PC-9 (cell line): ENCODE measurements at regions of chr13 and their contacts with region 1.

Region 1: GRCh38 chr13:113562085-113562749 is 22.3 kb upstream of the TFDP1 start:
- DNase-seq: peak; percentile 53 to 60
- H3K4me3 ChIP-seq: no peak overlapping the region
- H3K27ac ChIP-seq: no peak overlapping the region
- H3K4me1 ChIP-seq: no peaks in the 10 kb centered on the region
- H3K27me3 ChIP-seq: no peaks in the 10 kb centered on the region
- CTCF ChIP-seq: peak; percentile 82

Region 2: DNA sequence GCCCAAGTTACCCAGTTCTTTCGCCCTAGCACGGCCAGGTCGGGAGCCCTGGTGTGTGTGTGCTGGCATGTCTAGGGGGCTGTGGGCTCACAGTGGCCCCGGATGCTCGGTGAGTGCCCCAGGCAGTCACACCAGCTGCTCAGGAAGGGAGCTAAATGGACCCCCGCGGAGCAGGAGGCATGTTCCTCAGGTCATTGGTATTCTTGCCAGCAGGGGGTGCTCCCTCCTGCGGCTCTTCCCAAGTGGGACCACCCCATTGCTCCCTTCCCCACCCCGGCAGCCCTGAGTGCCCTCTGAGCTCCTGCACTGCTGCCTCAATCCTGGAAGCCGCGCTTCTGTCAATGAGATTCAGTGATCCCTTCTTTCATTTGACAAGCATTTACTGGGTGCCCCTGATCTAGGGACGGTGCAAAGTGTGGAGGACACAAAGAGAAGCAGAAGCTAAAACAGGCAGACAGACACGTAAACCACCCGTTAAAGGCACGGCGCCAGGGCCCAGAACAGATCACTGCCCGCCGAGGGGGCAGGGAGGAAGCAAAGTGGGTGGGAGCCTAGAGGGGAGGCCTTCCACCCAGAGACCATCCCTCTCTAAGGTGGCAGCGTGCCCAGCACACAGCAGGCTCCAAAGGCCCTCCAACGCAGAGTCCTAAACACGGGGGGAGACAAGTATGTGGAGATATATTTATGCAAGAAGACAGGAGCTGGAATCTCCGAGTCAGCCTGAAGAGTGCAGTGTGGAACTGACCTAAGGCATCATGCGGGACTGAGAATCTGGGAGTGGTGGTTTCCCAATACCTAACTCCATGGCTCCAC is 103.8 kb before region 1 on chr13:
- CTCF ChIA-PET with region 1: no interaction called
- POLR2A ChIA-PET with region 1: no interaction called
- intact Hi-C with region 1: loop called (anchors 5 kb)
- DNase-seq: no peak
- H3K4me3 ChIP-seq: no peak overlapping the region
- H3K27ac ChIP-seq: no peak overlapping the region
- H3K4me1 ChIP-seq: no peaks in the 10 kb centered on the region
- H3K27me3 ChIP-seq: no peaks in the 10 kb centered on the region
- CTCF ChIP-seq: peak; percentile 49; the same call in 1 of the 2 replicates

Region 3: DNA sequence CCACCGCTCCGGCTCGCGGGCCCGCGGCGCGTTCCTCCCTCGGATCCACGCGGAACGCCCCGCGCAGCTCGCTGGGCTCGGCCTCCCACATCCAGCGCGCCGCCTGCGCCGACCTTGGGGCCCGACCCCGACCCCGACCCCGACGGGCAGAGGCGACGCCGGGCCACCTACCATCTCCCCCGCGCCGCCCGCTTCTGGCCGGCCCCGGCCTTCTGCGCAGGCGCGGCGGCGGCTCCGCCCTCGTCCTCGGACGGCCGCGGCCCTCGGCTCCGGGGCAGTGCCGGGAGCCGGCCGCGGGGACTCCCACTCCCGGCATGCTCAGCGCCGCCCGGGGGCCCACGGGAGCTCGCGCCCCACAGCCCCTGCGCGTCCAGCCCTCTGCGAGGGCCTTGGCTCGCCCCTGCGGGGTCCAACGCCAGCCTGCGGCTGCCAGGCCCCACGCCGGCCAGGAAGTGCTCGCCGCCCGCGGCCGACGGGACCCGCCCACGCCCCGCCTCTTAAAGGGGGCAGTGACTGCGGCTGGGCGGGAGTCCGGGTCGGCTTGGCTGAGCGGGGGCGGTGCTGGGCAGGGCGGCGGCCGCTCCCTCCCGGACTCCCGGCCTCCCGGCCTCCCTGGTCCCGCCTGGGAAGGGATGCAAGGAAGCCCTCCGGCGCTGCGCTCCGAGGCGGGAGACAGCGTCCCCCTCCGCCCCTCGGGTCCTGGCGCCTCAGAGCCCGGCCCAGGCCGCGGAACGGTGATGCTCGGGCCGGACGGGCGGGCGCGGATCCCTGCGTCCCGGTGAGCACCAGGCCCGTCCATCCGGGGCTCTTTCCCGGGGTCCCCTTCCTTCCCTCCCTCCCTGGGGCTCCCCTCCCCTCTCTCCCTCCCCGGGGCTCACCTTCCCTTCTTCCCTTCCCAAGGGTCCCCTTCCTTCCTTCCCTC is 71.5 kb before region 1 on chr13 and contains the start of gene DCUN1D2:
- CTCF ChIA-PET with region 1: interaction called, 4 read pairs
- POLR2A ChIA-PET with region 1: interaction called, 3 read pairs
- intact Hi-C with region 1: loop called (anchors 1 kb)
- DNase-seq: peak; percentile 76 to 96
- H3K4me3 ChIP-seq: peak within 1 kb of the TSS; percentile 86
- H3K27ac ChIP-seq: peak within 1 kb of the TSS; percentile 23
- H3K4me1 ChIP-seq: peaks cover 55% of the 10 kb centered on the region
- H3K27me3 ChIP-seq: no peaks in the 10 kb centered on the region
- CTCF ChIP-seq: no peak
- total RNA-seq, gene DCUN1D2: 33.0 and 34.7 TPM in 2 replicates

Region 4: DNA sequence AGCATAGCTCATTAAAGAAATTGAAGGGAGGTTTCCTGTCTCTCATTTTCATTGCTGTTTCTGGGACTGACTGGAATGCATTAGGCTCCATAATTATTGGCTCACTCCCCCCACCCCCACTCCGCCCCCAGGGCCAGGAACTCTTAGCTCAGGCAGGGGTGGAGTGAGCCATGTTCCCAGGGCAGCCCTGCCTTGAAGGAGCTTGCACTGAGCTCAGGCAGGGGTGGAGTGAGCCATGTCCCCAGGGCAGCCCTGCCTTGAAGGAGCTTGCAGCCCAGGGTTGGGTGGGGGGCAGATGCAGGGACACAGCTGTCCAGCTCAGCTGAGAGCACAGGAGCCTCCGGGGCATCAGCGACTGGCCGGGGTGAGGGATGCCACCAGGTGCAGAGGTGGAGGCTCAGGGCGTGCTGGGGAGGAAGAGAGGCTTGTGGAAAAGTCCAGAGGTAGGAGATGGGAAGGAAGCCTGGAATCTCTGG is 16.7 kb before region 1 on chr13:
- CTCF ChIA-PET with region 1: no interaction called
- POLR2A ChIA-PET with region 1: interaction called, 14 read pairs
- intact Hi-C with region 1: no loop called
- DNase-seq: peak; percentile 50 to 74
- H3K4me3 ChIP-seq: no peak overlapping the region
- H3K27ac ChIP-seq: no peak overlapping the region
- H3K4me1 ChIP-seq: peaks cover 23% of the 10 kb centered on the region
- H3K27me3 ChIP-seq: no peaks in the 10 kb centered on the region
- CTCF ChIP-seq: no peak

Region 5: DNA sequence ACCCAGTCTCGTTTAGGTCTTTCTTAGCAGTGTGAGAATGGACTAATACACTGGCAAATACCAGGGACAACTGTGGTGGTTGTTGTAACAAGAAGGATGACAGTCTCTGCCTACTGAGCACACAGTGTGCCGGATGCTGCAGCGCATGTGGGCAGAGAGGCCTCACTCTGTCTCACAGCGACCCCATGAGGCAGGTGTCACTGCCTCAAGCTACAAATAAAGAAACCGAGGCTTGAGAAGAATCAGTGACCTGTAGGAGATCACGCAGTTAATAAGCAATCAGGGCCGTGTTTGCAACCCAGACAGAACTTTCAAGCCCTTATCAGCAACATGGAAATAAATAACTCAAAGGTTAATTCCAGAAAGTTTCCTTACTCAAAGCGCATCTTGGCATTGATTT is 342.2 kb after region 1 on chr13:
- CTCF ChIA-PET with region 1: no interaction called
- POLR2A ChIA-PET with region 1: no interaction called
- intact Hi-C with region 1: no loop called
- DNase-seq: no peak
- H3K4me3 ChIP-seq: no peak overlapping the region
- H3K27ac ChIP-seq: no peak overlapping the region
- H3K4me1 ChIP-seq: no peaks in the 10 kb centered on the region
- H3K27me3 ChIP-seq: no peaks in the 10 kb centered on the region
- CTCF ChIP-seq: peak; percentile 56